Cardiac septum (tissue), 1 donor: ENCODE measurements at regions of chr11 and their contacts with region 1.

Region 1: DNA sequence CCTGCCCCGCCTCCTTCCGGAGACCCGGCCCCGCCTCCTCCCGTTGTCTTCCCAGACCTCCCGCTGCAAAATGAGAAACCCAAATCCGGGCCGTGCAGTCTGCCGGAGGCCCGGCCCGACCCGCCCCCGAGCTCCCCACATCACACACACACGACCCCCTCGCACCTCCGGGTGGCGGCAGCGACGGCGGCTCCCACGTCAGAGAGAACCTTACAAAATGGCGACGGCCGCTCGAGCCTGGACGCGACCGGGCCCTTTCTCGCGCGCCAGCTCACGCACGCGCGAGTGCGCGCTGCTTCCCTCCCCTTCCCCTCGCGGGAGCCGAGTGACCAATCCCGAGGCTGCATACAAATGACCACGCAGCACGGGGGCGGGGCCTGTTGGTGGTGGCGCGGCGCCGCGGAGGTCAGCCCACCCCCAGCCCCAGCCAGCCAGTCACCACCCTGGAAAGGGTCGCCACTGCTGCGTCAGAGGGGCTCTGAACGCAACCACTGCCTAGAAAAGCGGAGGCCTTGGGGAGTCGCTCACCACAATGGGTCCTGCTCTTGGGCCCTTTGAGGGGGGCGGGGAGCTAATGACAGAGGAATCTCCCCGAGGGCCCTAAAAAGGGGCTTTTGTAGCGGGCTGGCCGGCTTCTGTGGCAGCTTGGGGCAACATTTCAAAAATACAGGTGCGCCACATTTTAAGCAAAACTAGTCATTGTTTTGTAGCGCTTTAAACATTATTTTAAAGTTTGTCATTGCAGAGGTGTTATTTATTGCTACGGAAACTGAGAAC is at the start of gene RBM4B:
- DNase-seq: peak; percentile 98
- total RNA-seq, gene RBM4B: 11.1 TPM

Region 2: GRCh38 chr11:66408488-66409214 is 269.1 kb before region 1 on chr11:
- intact Hi-C with region 1: loop called (anchors 5 kb)
- DNase-seq: peak; percentile 94

Region 3: DNA sequence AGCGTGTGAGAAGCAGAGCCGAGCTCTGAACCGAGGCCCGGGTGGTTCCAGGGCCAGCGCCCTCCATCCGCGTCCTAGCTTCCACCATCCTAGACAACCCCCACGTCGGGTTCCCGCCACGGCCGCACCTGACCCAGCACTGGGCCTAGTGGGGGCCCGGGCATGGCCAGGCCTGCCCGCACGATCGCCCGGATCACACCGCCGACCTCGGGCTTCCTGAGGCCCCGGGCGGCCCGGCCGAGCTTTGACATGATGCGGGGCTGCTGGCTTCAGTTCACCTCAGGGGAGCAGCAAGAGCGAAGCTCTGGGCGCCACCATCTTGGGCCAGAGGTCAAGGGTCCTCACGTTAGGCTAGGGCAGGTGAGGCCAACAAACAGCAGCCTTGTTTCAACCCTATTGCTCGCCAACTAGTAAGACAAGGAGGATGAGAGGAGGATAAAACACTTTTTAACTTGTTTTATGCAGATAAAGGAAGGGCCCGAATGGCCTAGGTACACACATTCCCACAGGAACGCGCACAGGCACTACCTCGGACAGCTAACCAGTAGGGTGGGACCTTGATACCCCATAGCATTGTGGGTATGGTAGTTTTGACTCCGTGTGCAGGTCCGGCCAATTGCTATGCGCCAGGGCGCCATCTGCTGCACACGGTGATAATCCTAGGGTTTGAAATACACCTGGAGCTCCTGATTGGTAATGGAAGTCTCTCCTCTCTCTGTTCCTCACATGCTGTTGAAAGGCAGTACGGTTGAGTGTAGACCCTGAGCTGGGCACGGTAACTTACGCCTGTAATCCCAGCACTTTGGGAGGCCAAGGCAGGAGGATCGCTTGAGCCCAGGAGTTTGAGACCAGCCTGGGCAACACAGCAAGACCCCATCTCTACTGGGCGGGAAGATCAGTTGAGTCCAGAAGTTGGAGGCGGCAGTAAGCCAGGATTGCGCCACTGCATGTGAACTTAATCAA is 239.0 kb before region 1 on chr11 and contains the start of gene MRPL11:
- intact Hi-C with region 1: loop called (anchors 5 kb)
- DNase-seq: peak; percentile 92
- total RNA-seq, gene MRPL11: 40.3 TPM

Region 4: GRCh38 chr11:66579017-66579606 is 98.7 kb before region 1 on chr11:
- intact Hi-C with region 1: loop called (anchors 1 kb)
- DNase-seq: peak; percentile 87

Region 5: DNA sequence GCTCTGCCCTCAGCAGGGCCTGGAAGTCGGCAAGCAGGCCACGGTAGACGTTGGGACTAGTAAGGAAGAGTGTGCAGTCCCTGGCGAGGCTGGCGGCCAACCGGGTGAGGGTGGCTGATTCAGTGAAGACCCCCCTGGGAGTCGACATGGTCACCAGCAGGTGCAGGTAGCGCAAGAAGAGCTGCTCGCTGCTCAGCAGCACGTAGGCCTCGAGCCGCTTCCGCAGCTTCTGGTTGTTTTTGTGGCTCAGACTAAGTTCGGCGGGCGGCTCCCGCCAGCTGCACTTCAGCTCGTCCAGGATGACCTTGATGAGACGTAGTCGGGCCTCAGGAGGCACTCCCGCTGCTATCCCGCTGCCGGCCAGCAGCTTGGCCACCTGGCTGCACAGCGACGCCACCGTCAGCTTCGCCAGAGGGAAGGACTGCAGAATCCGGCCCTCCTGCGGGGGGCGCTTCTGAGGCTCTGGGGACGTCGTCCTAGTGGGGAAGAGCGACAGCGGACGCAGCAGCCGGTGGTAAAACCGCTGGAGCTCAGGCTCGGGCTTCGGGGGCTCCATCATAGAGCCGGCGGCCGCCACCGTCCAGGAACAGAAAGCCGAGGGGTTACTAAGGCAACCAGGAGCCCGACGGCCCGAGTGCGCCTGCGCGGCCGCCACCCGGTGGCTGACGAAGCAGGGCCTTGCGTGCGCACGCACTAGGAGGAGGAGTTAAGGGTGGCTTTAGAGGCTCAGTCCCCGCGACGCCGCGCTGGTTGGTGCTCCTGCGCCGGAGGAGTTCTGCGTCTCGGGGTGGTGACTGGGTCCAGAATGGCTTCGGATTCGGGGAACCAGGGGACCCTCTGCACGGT is 85.1 kb before region 1 on chr11 and contains the starts of genes CCDC87 and CCS:
- intact Hi-C with region 1: loop called (anchors 5 kb)
- DNase-seq: peak; percentile 99
- total RNA-seq, gene CCDC87: 0.43 TPM
- total RNA-seq, gene CCS: 21.9 TPM

Region 6: GRCh38 chr11:66616379-66617154 is 61.2 kb before region 1 on chr11 and contains the start of gene RBM14:
- intact Hi-C with region 1: loop called (anchors 1 kb)
- DNase-seq: peak; percentile 99
- total RNA-seq, gene RBM14: 35.2 TPM

Region 7: GRCh38 chr11:66638177-66639065 is 39.4 kb before region 1 on chr11 and contains the start of gene RBM4:
- intact Hi-C with region 1: loop called (anchors 5 kb)
- DNase-seq: peak; percentile 99
- total RNA-seq, gene RBM4: 60.1 TPM

Region 8: GRCh38 chr11:66810576-66811185 is 132.9 kb after region 1 on chr11:
- intact Hi-C with region 1: no loop called
- DNase-seq: no peak